RWPE1 (cell line): ENCODE measurements at regions of chr11 and their contacts with region 1.

Region 1: DNA sequence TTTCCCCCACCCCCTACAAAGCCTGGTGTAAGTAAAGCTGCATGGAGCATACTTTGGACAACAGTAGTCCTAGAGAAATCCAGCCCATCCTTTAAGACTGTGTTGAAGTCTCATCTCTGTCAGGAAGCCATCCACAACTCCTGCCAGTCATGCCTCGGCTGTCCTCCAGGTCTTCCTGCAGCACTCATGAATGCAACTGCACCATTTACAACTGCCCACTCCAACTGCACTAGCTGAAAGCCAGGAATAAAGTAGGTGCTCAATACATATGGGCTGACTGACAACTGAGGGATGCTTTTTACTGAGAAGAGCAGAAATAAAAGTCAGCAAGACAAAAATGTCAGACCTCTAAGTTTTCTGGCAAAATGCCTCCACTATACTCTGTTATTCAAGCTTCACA is 27.4 kb downstream of the IL18BP start:
- DNase-seq: no peak
- H3K27ac ChIP-seq: no peak overlapping the region; the same call in 1 of the 2 replicates
- CTCF ChIP-seq: no peak

Region 2: GRCh38 chr11:72040726-72041441 is 14.8 kb after region 1 on chr11:
- CTCF ChIA-PET with region 1: interaction called, 18 read pairs
- POLR2A ChIA-PET with region 1: no interaction called
- DNase-seq: peak; percentile 85
- H3K27ac ChIP-seq: peak overlapping the region; percentile 100
- CTCF ChIP-seq: no peak

Region 3: GRCh38 chr11:72085621-72086351 is 59.7 kb after region 1 on chr11:
- CTCF ChIA-PET with region 1: interaction called, 44 read pairs
- POLR2A ChIA-PET with region 1: no interaction called
- DNase-seq: no peak
- H3K27ac ChIP-seq: no peak overlapping the region
- CTCF ChIP-seq: no peak

Region 4: GRCh38 chr11:72141066-72141465 is 115.0 kb after region 1 on chr11:
- CTCF ChIA-PET with region 1: interaction called, 14 read pairs
- POLR2A ChIA-PET with region 1: no interaction called
- DNase-seq: peak; percentile 84
- H3K27ac ChIP-seq: peak overlapping the region; percentile 86; the same call in 1 of the 2 replicates
- CTCF ChIP-seq: no peak

Region 5: DNA sequence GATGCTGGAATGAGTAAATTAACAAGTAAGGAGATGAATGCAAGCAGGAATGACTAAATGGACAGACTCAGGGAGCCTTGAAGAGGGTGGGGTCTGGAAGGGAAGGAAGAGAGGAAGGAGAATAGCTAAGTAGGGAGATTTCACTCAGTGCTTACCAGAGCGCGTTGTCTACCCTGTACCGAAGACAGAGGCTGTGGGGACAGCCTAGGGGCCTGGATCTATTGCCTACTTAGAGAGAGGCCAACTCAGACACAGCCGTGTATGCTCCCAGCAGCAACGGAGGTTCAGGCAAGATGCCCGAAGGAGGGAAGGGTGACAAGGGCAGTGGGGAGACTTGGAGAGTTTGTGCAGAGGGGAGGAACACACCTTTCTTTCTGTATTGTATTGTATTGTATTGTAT is 190.5 kb after region 1 on chr11 and contains the start of gene FOLR2:
- CTCF ChIA-PET with region 1: no interaction called
- POLR2A ChIA-PET with region 1: no interaction called
- DNase-seq: no peak
- H3K27ac ChIP-seq: no peak within 1 kb of the TSS
- CTCF ChIP-seq: no peak

Region 6: DNA sequence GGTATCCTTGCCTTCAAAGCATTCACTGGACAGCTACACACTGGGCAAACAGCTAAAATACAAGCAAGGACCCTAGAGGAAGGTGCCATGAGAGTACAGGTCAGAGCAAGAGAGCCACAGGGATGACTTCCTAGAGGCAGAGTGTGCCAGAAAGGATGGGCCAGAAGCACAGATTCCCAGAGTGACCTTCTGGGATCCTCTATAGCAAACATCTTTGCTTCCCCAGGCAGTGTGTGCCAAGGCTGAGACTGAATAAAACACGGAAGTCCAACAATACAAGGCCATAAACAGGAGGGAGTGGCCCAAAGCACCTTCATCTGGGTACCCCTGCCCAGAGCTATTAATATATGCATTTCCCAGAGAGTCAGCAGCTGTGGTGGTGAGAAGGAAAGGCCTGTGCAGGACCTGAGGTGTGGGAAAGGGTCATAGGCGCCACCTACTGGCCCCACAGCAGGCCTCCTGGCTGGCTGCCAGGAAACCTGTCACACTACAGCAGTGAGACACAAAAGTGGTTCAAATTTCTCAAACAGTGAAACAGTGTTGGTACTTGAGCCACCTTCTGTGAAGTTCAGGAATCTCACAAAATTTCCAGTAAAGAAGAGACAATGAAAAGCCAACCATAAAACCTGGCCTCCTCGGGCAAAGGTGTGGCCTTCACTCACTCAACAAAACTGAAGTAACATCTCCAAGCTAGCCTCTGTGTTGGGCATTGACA is 388.0 kb after region 1 on chr11:
- CTCF ChIA-PET with region 1: interaction called, 12 read pairs
- POLR2A ChIA-PET with region 1: no interaction called
- DNase-seq: peak; percentile 76
- H3K27ac ChIP-seq: no peak overlapping the region
- CTCF ChIP-seq: peak; percentile 90